IMR-90 (cell line): ENCODE measurements at regions of chr15 and their contacts with region 1.

Region 1: DNA sequence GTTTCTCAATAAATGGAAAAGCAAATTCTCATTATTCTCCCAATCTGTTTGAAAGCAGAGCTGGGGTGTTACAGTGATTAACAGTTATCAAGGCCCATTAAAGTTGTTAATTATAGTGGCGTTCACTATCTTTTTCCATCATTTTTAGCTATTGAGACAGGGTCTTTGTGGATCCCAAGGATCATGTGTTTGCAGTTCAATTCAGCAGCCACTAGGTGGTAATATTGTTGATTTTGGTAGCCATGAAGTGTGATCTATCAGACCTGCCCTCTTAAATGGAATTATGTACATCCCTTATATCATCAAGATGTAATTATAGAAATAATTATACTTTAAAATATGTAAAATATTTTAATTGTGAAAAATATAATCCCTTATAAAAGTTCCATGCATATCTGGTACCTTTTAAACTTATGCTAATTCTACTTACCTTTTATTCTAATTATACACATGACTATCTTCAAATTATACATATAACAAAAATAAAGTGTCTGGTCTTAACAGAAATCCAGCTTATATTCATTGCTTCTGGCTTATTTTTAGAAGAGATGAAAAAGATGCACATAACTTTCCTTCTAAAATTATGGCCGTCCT is 126.4 kb downstream of the GREM1 start:
- DNase-seq: peak; percentile 70
- ATAC-seq: 0 out of 2 replicates have a peak, but pooled peaks have one; percentile 27
- H3K4me3 ChIP-seq: no peak overlapping the region
- H3K27ac ChIP-seq: 0 out of 2 replicates have a peak overlapping the region, but pooled peaks have one; percentile 23
- H3K4me1 ChIP-seq: peaks cover 9% of the 10 kb centered on the region
- H3K27me3 ChIP-seq: no peaks in the 10 kb centered on the region
- CTCF ChIP-seq: peak; percentile 63
- POLR2A ChIP-seq: no peak
- RAD21 ChIP-seq: peak; percentile 64

Region 2: GRCh38 chr15:32657198-32657883 is 186.9 kb before region 1 on chr15:
- CTCF ChIA-PET with region 1: interaction called, 8 read pairs
- POLR2A ChIA-PET with region 1: no interaction called
- dilution Hi-C with region 1: no loop called
- in situ Hi-C with region 1: no loop called
- intact Hi-C with region 1: loop called (anchors 5 kb)
- DNase-seq: no peak
- ATAC-seq: no peak
- H3K4me3 ChIP-seq: no peak overlapping the region
- H3K27ac ChIP-seq: no peak overlapping the region
- H3K4me1 ChIP-seq: peaks cover 3% of the 10 kb centered on the region
- H3K27me3 ChIP-seq: no peaks in the 10 kb centered on the region
- CTCF ChIP-seq: no peak
- POLR2A ChIP-seq: no peak
- RAD21 ChIP-seq: no peak

Region 3: GRCh38 chr15:32723171-32723948 is 120.9 kb before region 1 on chr15:
- CTCF ChIA-PET with region 1: no interaction called
- POLR2A ChIA-PET with region 1: no interaction called
- dilution Hi-C with region 1: no loop called
- in situ Hi-C with region 1: no loop called
- intact Hi-C with region 1: loop called (anchors 5 kb)
- DNase-seq: no peak
- ATAC-seq: no peak
- H3K4me3 ChIP-seq: no peak overlapping the region
- H3K27ac ChIP-seq: peak overlapping the region; percentile 36; the same call in 1 of the 2 replicates
- H3K4me1 ChIP-seq: peaks cover 2% of the 10 kb centered on the region; the same call in 1 of the 2 replicates
- H3K27me3 ChIP-seq: no peaks in the 10 kb centered on the region
- CTCF ChIP-seq: no peak
- POLR2A ChIP-seq: no peak; the same call in 1 of the 2 replicates
- RAD21 ChIP-seq: no peak

Region 4: DNA sequence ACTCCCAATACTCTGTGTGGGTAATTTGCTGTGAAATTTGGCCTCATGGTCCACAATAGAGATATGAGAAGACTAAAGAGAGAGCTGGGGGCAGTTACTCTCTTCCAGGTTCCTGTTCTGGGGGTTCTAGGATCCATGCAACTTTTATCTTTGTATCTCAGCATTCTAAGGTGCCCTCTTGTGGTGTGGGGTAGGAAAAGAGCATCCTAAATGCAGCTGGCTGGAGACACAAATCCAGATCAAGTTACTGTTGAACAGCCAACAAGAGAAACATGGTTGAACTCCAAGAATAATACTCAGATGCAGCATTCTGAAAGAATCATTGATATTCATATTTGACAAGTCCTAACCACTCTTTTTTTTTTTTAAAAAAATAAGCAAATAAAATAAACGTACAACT is 111.8 kb after region 1 on chr15:
- CTCF ChIA-PET with region 1: interaction called, 14 read pairs
- POLR2A ChIA-PET with region 1: no interaction called
- dilution Hi-C with region 1: no loop called
- in situ Hi-C with region 1: no loop called
- intact Hi-C with region 1: loop called (anchors 2 kb)
- DNase-seq: peak; percentile 95
- ATAC-seq: peak; percentile 73
- H3K4me3 ChIP-seq: no peak overlapping the region
- H3K27ac ChIP-seq: peak overlapping the region; percentile 92; the same call in 1 of the 2 replicates
- H3K4me1 ChIP-seq: peaks cover 37% of the 10 kb centered on the region
- H3K27me3 ChIP-seq: no peaks in the 10 kb centered on the region
- CTCF ChIP-seq: peak; percentile 79
- POLR2A ChIP-seq: no peak
- RAD21 ChIP-seq: peak; percentile 79

Region 5: DNA sequence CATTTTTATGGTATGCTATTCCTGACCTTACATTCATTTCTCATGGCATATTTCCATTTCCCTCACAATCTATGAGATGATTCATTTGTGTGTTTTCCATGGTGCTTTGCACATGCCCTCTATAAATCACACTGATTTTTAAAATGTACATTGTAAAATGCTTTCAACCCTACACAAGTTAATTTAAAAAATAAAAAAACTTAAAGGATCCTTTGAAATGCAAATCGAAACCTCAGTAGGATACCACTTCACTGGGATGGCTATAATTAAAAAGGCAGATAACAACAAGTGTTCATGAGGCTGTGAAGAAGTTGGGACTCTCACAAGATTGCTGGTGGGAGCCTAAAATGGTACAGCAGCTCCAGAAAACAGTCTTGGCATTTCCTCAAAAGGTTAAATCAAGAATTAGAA is 266.8 kb after region 1 on chr15:
- CTCF ChIA-PET with region 1: no interaction called
- POLR2A ChIA-PET with region 1: no interaction called
- dilution Hi-C with region 1: no loop called
- in situ Hi-C with region 1: loop called (anchors 10 kb)
- intact Hi-C with region 1: no loop called
- DNase-seq: peak; percentile 75
- ATAC-seq: peak; percentile 15; the same call in 1 of the 2 replicates
- H3K4me3 ChIP-seq: no peak overlapping the region
- H3K27ac ChIP-seq: peak overlapping the region; percentile 94
- H3K4me1 ChIP-seq: peaks cover 22% of the 10 kb centered on the region
- H3K27me3 ChIP-seq: no peaks in the 10 kb centered on the region
- CTCF ChIP-seq: no peak
- POLR2A ChIP-seq: no peak
- RAD21 ChIP-seq: no peak